HEK293 (cell line): ENCODE measurements at regions of chr11 and their contacts with region 1.

Region 1: GRCh38 chr11:124644426-124645280 is 22.0 kb downstream of the TBRG1 start:
- H3K4me3 ChIP-seq: no peak overlapping the region
- H3K27ac ChIP-seq: no peak overlapping the region
- H3K4me1 ChIP-seq: no peaks in the 10 kb centered on the region
- CTCF ChIP-seq: peak; percentile 72; the same call in 1 of the 2 replicates

Region 2: DNA sequence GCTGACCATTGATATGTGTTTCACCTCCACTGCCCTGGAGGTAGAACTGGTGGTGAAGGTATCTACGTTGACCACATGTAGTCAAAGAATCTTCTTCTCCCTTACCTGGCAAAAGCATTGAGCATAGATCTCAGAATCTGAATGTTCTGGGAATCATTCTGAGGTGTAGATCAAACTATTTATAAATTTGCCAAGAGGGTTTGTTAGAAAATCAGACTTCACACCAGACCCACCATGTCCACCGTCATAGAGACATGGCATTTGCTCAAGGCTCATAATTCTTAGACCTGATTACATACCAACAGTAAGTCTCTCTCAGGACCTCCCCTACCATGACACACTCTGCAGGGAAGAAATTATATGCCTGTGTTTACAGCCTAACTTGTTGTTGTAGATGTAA is 260.3 kb before region 1 on chr11 and contains the start of gene OR8B2:
- CTCF ChIA-PET with region 1: no interaction called
- POLR2A ChIA-PET with region 1: no interaction called
- H3K4me3 ChIP-seq: no peak within 1 kb of the TSS
- H3K27ac ChIP-seq: no peak within 1 kb of the TSS
- H3K4me1 ChIP-seq: no peaks in the 10 kb centered on the region
- CTCF ChIP-seq: no peak

Region 3: DNA sequence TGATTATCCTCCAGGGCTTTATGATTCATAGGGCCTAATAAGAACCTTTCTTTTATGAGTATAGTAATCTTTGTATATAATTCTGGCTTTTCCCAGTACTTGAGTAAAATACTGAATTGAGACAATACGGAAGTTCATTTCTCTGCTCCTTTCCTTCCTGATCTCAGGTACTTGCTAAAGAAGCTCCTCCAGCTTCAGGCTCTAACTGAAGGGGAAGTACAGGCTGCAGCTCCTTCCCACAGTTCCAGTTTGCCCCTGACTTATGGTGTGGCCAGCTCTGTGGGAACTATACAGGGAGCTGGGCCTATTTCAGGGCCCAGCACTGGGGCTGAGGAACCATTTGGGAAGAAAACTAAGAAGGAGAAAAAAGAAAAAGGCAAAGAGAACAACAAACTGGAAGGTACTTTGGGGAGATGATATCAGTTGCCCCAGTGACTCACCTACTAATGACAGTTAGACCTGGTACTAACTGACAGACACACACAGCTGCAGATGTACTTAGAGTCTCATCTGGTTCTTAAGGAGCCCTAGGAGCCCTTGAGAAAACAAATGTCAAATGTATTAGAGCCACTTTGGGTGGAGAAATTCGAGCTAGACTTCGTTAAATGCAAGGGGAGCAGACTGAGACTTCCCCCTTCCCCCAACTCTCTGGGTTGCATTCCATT is 19.0 kb before region 1 on chr11:
- CTCF ChIA-PET with region 1: interaction called, 19 read pairs
- POLR2A ChIA-PET with region 1: interaction called, 6 read pairs
- H3K4me3 ChIP-seq: no peak overlapping the region
- H3K27ac ChIP-seq: no peak overlapping the region
- H3K4me1 ChIP-seq: no peaks in the 10 kb centered on the region
- CTCF ChIP-seq: no peak

Region 4: GRCh38 chr11:124829986-124830385 is 185.3 kb after region 1 on chr11:
- CTCF ChIA-PET with region 1: interaction called, 53 read pairs
- POLR2A ChIA-PET with region 1: no interaction called
- H3K4me3 ChIP-seq: no peak overlapping the region
- H3K27ac ChIP-seq: no peak overlapping the region
- H3K4me1 ChIP-seq: no peaks in the 10 kb centered on the region
- CTCF ChIP-seq: no peak